ENCODE measurements at regions of chr10 and their contacts with region 1.

Region 1: DNA sequence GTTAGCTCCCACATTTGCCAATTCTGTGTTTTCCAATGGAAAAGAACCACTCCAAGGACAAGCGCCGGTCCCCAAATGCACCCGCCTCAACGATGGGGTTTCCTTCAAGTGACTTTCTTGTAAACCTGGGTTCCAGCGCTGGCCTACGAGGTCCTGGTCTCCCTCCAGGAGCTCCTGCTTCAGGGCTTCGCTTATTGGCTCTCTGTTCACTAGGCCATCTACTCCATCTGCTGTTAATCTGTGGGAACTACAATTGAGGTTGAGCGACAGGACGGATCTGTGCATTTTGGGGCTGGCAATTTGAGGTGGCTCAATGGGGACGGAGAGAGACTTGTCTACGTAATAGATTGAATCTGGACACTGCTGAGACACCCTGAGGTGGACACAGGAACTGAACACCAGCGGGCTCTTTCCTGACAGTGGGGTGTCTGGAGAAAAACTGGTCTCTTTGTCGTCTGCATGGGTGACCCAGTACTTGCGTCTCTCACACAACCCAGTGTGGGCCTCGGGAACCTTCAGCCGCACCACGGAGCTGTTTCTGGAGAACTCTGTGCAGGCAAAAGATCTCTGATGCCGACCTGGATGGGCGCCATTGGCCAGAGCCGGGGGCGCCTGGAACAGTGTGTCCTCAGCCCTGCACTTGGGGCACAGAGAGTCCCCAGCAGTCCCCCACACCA is 115.9 kb upstream of the ADAM12 start:
- DNase-seq: peak; percentile 83
- H3K4me3 ChIP-seq: peak overlapping the region in 1 of 2 experiments; percentile 32; a peak in 1 of 4 replicates
- H3K27ac ChIP-seq: no peak overlapping the region
- H3K4me1 ChIP-seq: peaks cover 0 to 3% of the 10 kb centered on the region in 2 experiments; a peak in 1 of 4 replicates
- H3K27me3 ChIP-seq: no peaks in the 10 kb centered on the region
- CTCF ChIP-seq: peak; percentile 75
- EP300 ChIP-seq: no peak
- RAD21 ChIP-seq: peak; percentile 98

Region 2: GRCh38 chr10:125936331-125936730 is 567.9 kb before region 1 on chr10:
- CTCF ChIA-PET with region 1: interaction called, 46 read pairs
- POLR2A ChIA-PET with region 1: no interaction called
- DNase-seq: no peak
- H3K4me3 ChIP-seq: no peak overlapping the region
- H3K27ac ChIP-seq: no peak overlapping the region
- H3K4me1 ChIP-seq: peaks cover 0 to 7% of the 10 kb centered on the region in 2 experiments; a peak in 1 of 4 replicates
- H3K27me3 ChIP-seq: no peaks in the 10 kb centered on the region
- CTCF ChIP-seq: no peak
- EP300 ChIP-seq: no peak
- RAD21 ChIP-seq: no peak

Region 3: DNA sequence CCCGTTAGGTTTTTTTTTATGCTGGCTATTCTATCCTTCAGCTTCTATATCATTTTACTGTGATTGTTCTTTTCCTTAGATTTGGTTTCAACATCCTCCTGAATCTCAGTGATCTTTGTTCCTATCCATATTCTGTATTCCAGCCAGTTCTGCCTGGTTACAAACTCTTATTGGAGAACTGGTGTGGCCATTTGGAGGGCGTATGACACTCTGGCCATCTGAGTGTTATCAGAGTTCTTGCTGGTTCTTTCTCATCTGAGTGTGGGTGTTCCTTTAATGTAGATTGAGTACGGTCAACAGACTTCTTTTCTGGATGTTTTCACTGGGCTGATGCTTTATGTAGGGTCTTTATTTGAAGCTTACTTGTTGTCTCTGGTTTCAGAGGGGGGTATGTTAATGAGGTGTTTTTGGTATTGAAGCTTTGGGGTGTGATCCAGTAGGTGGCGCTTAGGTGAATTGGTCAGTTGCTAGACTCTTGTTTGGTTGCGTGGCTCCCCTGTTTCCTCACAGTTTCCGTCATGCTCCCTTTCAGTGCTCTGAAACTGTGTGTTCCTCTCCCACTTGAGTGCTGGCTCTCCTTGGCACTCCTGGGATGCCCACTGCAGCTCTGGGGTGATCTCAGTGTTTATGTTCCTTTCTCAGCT is 527.1 kb before region 1 on chr10:
- CTCF ChIA-PET with region 1: interaction called, 17 read pairs
- POLR2A ChIA-PET with region 1: interaction called, 3 read pairs
- DNase-seq: no peak
- H3K4me3 ChIP-seq: no peak overlapping the region
- H3K27ac ChIP-seq: no peak overlapping the region
- H3K4me1 ChIP-seq: peaks cover 0 to 4% of the 10 kb centered on the region in 2 experiments; a peak in 1 of 4 replicates
- H3K27me3 ChIP-seq: no peaks in the 10 kb centered on the region
- CTCF ChIP-seq: no peak
- EP300 ChIP-seq: no peak
- RAD21 ChIP-seq: no peak

Region 4: DNA sequence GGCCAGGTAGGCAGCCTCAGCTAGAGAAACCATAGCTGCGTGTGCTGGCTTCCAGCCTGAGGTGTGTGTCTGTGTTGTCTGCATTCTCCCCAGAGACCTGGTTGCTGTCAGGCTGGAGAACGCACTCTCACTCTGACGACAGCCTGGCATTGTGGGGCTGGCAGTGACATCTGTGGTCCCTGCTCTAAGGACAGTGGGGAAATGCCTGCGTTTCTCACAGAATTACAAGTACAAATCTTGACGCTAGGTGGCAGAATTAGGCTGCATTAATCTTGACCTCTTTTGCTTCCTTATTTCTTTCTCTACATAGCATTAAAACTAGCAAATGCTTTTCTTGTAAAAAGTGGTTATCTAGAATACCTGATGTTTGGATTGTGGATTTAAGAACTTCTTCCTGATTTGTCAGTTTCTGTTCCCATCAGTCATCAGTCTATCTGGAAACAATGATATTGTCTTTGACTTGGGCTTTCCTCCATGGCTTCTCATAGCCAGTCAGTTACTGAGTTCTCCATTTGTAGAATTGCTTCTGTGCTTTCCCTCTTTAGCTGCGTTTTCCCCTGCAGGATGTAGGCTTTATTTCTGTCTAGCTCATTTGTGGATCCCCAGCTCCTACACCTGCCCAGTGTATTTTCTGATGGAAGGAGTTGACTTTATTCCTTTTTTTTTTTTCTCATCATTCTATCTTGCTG is 521.8 kb before region 1 on chr10:
- CTCF ChIA-PET with region 1: interaction called, 36 read pairs
- POLR2A ChIA-PET with region 1: interaction called, 3 read pairs
- DNase-seq: peak; percentile 78
- H3K4me3 ChIP-seq: no peak overlapping the region
- H3K27ac ChIP-seq: no peak overlapping the region; a peak in 1 of 4 replicates
- H3K4me1 ChIP-seq: peaks cover 0 to 7% of the 10 kb centered on the region in 2 experiments; a peak in 3 of 4 replicates
- H3K27me3 ChIP-seq: no peaks in the 10 kb centered on the region
- CTCF ChIP-seq: peak; percentile 71
- EP300 ChIP-seq: peak in 1 of 2 experiments; percentile 48; a peak in 1 of 4 replicates
- RAD21 ChIP-seq: peak; percentile 90

Region 5: DNA sequence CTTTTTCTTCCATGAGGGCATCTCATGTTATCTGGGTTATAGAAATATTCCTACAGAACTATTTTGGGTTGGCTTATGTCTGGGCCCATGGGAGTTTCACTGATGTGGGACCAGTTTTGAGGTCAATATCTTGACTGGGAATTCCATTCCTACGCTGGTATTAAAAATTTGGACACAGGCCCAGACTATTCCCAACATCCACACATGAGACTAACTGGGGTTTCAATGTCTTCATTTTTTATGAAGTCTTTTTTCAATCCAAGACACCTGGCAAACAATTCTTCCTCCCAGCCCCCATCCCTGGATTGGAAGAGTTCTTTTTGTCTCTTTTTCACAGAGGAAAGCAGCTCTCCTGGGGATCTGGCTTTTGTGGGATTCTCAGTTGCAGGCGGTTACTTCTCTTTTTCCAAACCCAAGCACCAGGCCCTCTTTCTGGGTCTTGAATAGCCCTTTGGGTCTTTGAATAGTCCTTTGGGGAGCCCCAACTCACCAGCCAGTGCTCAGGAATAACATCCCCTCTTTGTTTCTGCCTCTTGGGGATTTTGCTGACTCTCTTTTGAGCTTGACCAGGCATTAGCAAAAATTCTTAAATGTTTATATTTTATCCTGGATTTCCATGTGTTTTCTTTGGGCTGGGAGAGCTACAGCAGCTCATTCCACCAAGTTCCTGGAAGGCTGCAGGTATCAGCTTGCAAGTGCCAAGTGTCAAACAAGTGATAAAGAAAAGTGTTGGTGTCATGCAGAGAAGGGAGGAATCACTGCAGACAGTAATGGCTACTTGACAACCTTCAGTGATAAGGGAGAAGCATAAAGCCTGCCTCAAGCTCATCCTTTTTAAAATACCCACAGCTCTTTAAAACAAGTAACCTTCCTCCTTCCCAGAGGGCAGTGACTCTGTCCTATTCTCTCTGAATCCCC is 350.2 kb before region 1 on chr10:
- CTCF ChIA-PET with region 1: no interaction called
- POLR2A ChIA-PET with region 1: no interaction called
- DNase-seq: no peak
- H3K4me3 ChIP-seq: no peak overlapping the region
- H3K27ac ChIP-seq: no peak overlapping the region
- H3K4me1 ChIP-seq: peaks cover 0 to 2% of the 10 kb centered on the region in 2 experiments; a peak in 2 of 4 replicates
- H3K27me3 ChIP-seq: no peaks in the 10 kb centered on the region
- CTCF ChIP-seq: no peak
- EP300 ChIP-seq: no peak
- RAD21 ChIP-seq: no peak

Region 6: DNA sequence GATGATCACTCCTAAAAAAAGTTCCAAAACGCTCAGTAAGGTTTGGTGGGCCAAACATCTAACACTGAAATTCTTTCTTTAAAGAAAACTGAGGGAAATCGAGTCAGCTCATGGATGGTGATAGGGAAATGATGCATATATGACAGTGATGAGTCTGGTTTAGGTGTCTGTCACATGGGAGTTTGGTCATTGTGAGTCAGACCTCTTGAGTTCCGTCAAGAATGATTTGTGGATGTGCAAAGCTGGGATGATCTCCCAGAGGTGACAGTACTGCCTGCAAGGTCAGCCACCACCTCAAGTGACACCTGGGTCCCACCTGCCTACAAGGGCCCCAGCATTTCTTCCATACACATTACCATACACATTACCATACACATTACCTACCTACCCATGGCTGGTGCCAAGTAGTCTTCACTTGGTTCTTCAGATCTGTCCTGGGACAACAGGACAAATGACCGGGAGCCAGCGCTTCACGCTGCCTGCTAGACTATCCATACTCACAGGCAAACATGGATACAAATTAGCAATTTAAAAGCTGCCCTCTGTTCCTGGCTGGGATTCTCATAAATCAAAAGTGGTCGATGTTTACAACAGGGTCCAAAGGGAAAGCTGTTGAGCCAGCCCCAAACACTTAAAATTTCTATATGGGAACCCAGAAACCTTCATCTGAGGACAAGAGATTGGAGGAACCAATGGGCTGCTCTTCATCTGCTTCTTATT is 244.3 kb before region 1 on chr10:
- CTCF ChIA-PET with region 1: interaction called, 11 read pairs
- POLR2A ChIA-PET with region 1: no interaction called
- DNase-seq: no peak
- H3K4me3 ChIP-seq: no peak overlapping the region
- H3K27ac ChIP-seq: no peak overlapping the region
- H3K4me1 ChIP-seq: peaks cover 7 to 21% of the 10 kb centered on the region in 2 experiments
- H3K27me3 ChIP-seq: no peaks in the 10 kb centered on the region
- CTCF ChIP-seq: no peak
- EP300 ChIP-seq: no peak
- RAD21 ChIP-seq: no peak

Measured in SK-N-SH (cell line).